Right ventricle myocardium superior (tissue), 1 donor: ENCODE measurements at regions of chr7 and their contacts with region 1.

Region 1: GRCh38 chr7:55593515-55594318 is 21.4 kb upstream of the VOPP1 start:
- DNase-seq: peak; percentile 78
- ATAC-seq: peak; percentile 72

Region 2: DNA sequence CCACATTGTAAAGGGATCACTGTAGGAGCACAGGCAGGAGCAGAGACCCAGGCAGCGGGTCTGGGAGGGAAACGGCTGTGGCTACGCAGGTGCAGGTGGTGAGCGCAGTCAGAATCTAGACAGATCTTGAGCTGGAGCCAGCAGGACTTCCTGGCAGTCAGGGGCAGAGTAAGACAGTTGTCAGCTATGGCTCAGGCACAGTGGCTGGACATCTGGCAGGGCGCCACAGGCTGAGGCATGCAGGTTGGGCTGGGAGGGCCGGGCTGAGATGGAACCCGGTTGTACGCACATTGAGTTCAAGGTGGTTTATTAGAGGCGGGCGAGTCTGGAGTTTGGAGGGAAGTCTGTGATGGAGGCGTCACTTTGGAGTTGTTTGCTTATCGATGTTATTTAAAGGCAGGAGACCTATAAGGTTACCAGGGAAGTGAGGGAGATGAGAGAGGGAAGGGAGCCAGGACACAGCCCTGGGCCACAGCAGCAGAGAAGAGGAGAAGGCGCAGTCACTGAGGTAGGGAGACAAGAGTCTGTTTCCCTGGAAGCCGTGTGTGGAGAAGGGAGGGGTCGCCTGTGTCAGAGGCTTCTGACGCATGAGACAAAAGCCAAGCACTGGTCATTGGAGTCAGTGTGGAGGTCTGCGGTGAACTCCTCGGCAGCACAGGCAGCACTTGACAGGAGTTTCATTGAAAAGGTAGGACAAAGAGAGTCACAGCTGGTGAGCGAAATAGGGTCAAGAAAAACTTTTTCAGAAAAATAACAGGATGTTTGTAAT is 154.8 kb before region 1 on chr7:
- intact Hi-C with region 1: loop called (anchors 5 kb)
- DNase-seq: peak; percentile 74
- ATAC-seq: peak; percentile 78

Region 3: DNA sequence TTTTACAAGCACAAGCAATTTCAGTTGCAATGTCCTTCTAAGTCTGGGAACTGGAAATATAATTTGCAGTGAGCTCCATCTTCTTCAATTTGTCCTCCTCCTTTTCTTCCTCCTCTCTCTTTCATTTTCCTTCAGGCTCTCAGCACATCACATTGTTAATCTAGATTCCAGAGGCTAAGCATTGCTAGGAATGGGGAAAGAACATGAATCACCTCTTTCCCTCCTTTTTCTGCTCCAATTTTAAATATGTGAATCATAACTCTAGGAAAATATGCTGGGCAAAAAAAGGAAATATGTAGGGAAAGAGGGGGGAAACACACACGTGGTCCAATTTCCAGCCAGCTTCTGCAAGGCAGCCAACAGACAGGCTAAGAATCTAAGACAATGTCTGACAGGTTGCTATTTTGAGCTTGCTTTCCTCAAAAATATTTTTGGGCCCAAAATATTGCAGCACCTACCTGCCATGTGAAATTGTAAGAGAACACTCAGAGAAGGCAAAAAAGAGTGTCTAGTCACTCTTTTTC is 595.2 kb after region 1 on chr7:
- intact Hi-C with region 1: no loop called
- DNase-seq: no peak
- ATAC-seq: no peak